ENCODE measurements at regions of chr7 and their contacts with region 1.

Region 1: GRCh38 chr7:95276114-95276513 is 48.2 kb downstream of the PON1 start:
- DNase-seq: peak; percentile 82
- ATAC-seq: peak; percentile 91
- H3K4me3 ChIP-seq: no peak overlapping the region
- H3K27ac ChIP-seq: no peak overlapping the region
- H3K4me1 ChIP-seq: peaks cover 16% of the 10 kb centered on the region
- H3K27me3 ChIP-seq: no peaks in the 10 kb centered on the region
- CTCF ChIP-seq: no peak

Region 2: GRCh38 chr7:95126053-95126709 is 149.9 kb before region 1 on chr7:
- CTCF ChIA-PET with region 1: no interaction called
- POLR2A ChIA-PET with region 1: interaction called, 23 read pairs
- intact Hi-C with region 1: no loop called
- DNase-seq: no peak
- ATAC-seq: no peak
- H3K4me3 ChIP-seq: no peak overlapping the region
- H3K27ac ChIP-seq: no peak overlapping the region
- H3K4me1 ChIP-seq: peaks cover 13% of the 10 kb centered on the region
- H3K27me3 ChIP-seq: no peaks in the 10 kb centered on the region
- CTCF ChIP-seq: no peak

Region 3: DNA sequence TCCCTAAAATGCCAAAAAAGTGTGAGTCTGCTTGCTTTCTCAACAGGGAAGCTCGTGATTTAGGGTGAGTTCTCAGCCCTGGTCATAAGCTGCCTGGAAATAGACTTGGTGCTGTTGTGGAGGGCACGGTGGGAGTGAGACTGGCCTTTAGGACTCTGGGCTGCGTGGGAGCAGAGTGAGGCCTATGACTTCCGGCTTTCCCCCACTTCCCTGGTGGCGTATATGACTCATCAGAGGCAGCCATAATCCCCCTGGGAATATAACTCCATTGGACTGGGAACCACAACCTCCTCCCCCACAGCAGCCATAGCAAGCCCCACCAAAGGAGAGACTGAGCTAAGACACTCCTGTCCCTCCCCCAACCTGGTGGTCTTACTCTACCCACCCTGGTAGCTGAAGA is 46.8 kb before region 1 on chr7:
- CTCF ChIA-PET with region 1: no interaction called
- POLR2A ChIA-PET with region 1: no interaction called
- intact Hi-C with region 1: no loop called
- DNase-seq: no peak
- ATAC-seq: no peak
- H3K4me3 ChIP-seq: no peak overlapping the region
- H3K27ac ChIP-seq: no peak overlapping the region
- H3K4me1 ChIP-seq: no peaks in the 10 kb centered on the region
- H3K27me3 ChIP-seq: no peaks in the 10 kb centered on the region
- CTCF ChIP-seq: no peak

Region 4: DNA sequence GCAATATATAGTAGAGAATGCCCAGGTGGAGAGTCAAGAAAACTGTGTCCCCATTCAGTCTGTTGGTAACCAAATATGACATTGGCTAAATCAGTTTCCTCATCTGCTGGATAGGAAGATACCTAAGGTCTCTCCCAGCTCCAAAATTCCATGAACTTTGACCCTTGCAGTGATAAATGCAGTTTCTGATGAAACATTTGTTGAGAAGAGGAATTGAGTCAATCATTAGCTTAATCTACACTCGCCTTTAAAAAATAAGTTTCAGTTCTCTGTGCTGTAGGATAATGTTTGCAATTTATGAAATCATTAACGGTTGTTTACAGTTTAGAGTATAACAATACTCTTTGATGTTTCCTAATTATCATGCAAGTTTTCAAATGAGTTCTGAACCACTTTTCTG is 1083.8 kb after region 1 on chr7:
- CTCF ChIA-PET with region 1: no interaction called
- POLR2A ChIA-PET with region 1: no interaction called
- intact Hi-C with region 1: no loop called
- DNase-seq: no peak
- ATAC-seq: no peak
- H3K4me3 ChIP-seq: no peak overlapping the region
- H3K27ac ChIP-seq: no peak overlapping the region
- H3K4me1 ChIP-seq: no peaks in the 10 kb centered on the region
- H3K27me3 ChIP-seq: no peaks in the 10 kb centered on the region
- CTCF ChIP-seq: no peak